Posterior cingulate gyrus (tissue), 11 donors: ENCODE measurements at regions of chr16 and their contacts with region 1.

Region 1: GRCh38 chr16:24367186-24367710 is 111.1 kb downstream of the CACNG3 start:
- DNase-seq: peak in 1 of 10 donors; percentile 52

Region 2: DNA sequence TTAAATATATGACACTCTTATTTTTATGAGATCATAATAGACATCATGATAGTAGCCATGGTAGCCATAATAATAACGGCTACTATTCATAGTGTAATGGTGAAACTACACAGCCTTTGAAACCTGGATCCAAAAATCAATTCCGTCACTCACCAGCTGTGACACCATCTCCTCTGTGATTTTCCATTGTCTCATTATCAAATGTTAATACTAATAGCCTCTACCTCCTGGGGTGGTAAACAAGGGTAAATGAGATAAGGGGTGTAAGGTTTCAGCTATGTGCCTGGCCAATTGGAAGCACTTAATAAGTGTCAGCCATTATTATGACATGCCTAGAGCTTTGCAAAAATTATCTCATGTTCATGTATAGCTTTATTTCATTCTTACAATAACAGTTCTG is 22.5 kb before region 1 on chr16:
- intact Hi-C with region 1: no loop called
- DNase-seq: no peak

Region 3: GRCh38 chr16:24428756-24429155 is 61.5 kb after region 1 on chr16:
- intact Hi-C with region 1: loop called (anchors 10 kb)
- DNase-seq: no peak